ENCODE measurements at regions of chr2 and their contacts with region 1.

Region 1: DNA sequence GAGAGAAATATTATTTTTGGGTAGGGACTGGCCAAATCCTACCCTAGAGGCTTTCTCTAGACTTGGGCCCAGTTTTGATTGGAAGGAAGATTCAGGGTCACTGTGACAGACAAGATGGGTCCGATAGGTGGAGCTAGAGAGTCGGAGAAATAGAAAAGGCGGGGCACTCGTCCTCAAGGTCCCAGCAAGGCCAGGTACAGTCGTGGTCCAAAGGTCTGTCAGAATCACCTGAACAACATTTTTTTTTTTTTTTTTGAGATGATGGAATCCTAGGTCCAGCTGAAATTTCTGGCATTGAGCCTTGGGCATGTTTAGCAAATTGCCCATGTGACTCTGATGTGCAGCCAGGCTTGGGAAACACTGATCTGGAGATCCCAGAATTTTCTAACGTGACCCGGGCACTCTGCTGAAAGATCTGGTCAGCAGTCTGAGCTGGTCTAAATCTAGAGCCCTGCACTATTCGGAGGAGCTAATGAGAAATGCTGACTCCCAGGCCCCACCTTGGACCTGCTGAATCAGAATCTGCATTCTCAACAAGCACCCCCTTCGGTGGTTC is 23.0 kb upstream of the NTSR2 start:
- DNase-seq: peak in 5 of 6 donors; percentile 44 to 89 (median 87)
- ATAC-seq: peak; percentile 81 to 93 (median 88)
- H3K4me3 ChIP-seq: no peak overlapping the region
- H3K27ac ChIP-seq: peak overlapping the region in 1 of 4 donors; percentile 29
- H3K4me1 ChIP-seq: peaks cover 0 to 8% (median 0%) of the 10 kb centered on the region in 3 donors
- H3K27me3 ChIP-seq: no peaks in the 10 kb centered on the region
- CTCF ChIP-seq: peak; percentile 54 to 77 (median 70)

Region 2: GRCh38 chr2:11558214-11558886 is 134.7 kb before region 1 on chr2:
- intact Hi-C with region 1: no loop called
- DNase-seq: peak in 1 of 6 donors; percentile 16
- ATAC-seq: no peak
- H3K4me3 ChIP-seq: no peak overlapping the region
- H3K27ac ChIP-seq: no peak overlapping the region
- H3K4me1 ChIP-seq: no peaks in the 10 kb centered on the region
- H3K27me3 ChIP-seq: no peaks in the 10 kb centered on the region
- CTCF ChIP-seq: no peak

Region 3: DNA sequence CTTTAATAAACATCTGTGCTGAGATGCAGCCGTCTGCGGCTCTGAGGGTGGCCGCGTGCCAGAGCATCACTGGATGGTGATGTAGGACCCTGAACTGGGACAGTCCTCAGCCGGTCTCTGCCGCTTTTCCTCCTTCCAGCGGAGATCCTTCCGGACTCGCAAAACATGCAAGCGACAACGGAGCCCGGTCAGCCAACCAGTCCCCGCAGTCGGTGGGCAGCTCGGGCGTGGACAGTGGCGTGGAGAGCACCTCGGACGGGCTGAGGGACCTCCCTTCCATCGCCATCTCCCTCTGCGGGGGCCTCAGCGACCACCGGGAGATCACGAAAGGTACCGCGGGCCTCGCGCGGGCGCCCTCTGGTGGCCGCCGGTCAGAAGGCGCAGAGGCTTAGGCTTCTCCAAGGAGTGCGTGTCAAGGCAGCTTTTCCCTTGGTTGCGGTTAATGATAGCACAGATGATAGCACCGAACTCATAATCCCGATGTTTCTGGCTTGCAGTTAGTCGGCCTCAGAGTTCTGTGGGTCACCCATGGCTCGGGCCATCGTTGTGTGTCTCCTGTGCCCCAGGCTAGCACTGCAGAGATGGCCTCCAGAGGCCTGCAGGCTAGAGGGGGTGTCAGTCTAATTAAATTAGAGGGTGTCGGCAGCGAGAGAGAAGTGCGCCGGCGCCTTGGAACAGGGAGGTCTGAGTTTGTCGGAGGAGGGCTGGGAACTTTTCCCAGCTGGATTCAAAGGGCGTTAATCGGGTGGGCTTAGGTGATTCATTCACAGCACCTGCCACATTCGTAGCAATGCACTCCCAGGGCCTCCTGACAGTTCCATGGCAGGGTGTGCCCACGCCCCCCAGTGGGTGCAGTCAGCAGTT is 91.9 kb after region 1 on chr2:
- intact Hi-C with region 1: loop called in 2 of 3 experiments (anchors 5 kb)
- DNase-seq: peak in 4 of 6 donors; percentile 38 to 79 (median 59)
- ATAC-seq: peak; percentile 53 to 88 (median 80)
- H3K4me3 ChIP-seq: no peak overlapping the region
- H3K27ac ChIP-seq: no peak overlapping the region
- H3K4me1 ChIP-seq: no peaks in the 10 kb centered on the region
- H3K27me3 ChIP-seq: no peaks in the 10 kb centered on the region
- CTCF ChIP-seq: peak; percentile 75 to 95 (median 84)

Measured in pancreas (tissue), 10 donors.